PC-3 (cell line): ENCODE measurements at regions of chr2 and their contacts with region 1.

Region 1: DNA sequence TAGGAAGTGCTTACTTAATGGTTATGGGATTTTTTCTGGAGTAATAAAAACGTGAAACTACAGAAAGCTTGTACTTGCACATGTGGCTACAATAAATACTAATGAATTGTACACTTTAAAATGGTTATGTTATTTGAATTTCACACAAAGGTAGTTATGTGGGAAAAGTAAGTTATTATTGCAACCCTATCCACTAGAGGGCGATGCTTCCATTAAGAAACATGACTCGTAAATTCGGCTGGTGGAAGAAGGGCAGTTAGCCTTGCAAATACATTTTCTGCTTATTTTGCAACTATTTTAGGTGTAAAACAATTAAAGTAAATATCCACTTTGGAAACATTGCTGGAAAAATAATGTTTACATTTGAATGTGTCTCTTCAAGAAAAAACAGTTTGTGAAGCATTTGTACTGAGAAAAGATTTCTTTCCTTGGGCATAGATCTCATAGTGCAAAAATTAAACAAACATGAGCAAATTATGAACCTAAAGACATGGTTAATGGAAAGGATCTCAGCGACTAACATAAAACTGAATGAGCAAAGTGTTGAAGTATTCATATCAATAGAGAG is 68.1 kb upstream of the CSRNP3 start:
- DNase-seq: peak; percentile 92
- ATAC-seq: peak; percentile 23
- H3K4me3 ChIP-seq: no peak overlapping the region
- H3K27ac ChIP-seq: no peak overlapping the region
- H3K4me1 ChIP-seq: peaks cover 23% of the 10 kb centered on the region
- H3K27me3 ChIP-seq: no peaks in the 10 kb centered on the region
- CTCF ChIP-seq: peak; percentile 97

Region 2: DNA sequence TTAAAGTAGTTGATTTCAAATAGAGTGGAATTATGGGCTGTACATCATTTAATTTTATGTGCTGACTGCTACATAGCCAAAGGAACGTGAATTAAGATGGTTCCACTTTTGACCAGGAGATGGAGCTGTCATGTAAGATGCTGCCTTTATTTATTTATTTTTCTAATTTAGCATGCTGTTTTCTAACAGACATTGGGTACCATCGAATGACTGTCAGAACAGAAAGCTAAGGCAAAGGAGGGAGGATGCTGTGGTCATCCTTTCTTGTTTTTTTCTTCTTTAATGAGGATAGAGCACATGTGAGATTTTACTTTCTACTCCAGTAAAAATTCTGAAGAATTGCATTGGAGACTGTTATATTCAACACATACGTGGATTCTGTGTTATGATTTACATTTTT is 162.1 kb before region 1 on chr2 and contains the start of gene SCN2A:
- CTCF ChIA-PET with region 1: no interaction called
- POLR2A ChIA-PET with region 1: no interaction called
- intact Hi-C with region 1: loop called (anchors 2 kb)
- DNase-seq: peak; percentile 67
- ATAC-seq: peak; percentile 37
- H3K4me3 ChIP-seq: no peak within 1 kb of the TSS
- H3K27ac ChIP-seq: no peak within 1 kb of the TSS
- H3K4me1 ChIP-seq: no peaks in the 10 kb centered on the region
- H3K27me3 ChIP-seq: no peaks in the 10 kb centered on the region
- CTCF ChIP-seq: peak; percentile 74
- total RNA-seq, gene SCN2A: 0.07 and 0.46 TPM in 2 replicates

Region 3: DNA sequence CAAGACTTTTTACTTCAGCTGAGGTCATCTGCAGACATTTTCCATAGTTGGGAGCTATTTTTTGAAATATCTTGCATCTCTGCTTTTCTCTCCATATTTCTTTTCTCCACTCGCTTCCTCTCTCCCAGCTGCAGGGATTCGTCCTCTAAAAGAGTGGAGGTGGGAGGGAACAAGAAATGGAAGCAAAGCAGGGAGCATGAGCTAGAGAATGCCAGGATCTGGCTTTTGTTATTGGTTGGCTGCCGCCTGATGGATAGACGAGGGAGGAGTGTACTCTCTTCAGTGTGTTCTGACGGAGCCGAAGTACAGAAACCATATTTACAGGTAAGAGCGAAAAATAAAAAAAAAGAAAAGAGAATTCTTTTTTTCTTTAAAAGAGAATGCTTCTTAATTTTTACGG is 68.0 kb after region 1 on chr2 and contains the start of gene CSRNP3:
- CTCF ChIA-PET with region 1: interaction called, 4 read pairs
- POLR2A ChIA-PET with region 1: no interaction called
- intact Hi-C with region 1: loop called (anchors 1 kb)
- DNase-seq: peak; percentile 97
- ATAC-seq: peak; percentile 100
- H3K4me3 ChIP-seq: peak within 1 kb of the TSS; percentile 73
- H3K27ac ChIP-seq: no peak within 1 kb of the TSS
- H3K4me1 ChIP-seq: peaks cover 24% of the 10 kb centered on the region; the same call in 1 of the 2 replicates
- H3K27me3 ChIP-seq: no peaks in the 10 kb centered on the region
- CTCF ChIP-seq: no peak
- total RNA-seq, gene CSRNP3: 2.2 and 8.3 TPM in 2 replicates

Region 4: DNA sequence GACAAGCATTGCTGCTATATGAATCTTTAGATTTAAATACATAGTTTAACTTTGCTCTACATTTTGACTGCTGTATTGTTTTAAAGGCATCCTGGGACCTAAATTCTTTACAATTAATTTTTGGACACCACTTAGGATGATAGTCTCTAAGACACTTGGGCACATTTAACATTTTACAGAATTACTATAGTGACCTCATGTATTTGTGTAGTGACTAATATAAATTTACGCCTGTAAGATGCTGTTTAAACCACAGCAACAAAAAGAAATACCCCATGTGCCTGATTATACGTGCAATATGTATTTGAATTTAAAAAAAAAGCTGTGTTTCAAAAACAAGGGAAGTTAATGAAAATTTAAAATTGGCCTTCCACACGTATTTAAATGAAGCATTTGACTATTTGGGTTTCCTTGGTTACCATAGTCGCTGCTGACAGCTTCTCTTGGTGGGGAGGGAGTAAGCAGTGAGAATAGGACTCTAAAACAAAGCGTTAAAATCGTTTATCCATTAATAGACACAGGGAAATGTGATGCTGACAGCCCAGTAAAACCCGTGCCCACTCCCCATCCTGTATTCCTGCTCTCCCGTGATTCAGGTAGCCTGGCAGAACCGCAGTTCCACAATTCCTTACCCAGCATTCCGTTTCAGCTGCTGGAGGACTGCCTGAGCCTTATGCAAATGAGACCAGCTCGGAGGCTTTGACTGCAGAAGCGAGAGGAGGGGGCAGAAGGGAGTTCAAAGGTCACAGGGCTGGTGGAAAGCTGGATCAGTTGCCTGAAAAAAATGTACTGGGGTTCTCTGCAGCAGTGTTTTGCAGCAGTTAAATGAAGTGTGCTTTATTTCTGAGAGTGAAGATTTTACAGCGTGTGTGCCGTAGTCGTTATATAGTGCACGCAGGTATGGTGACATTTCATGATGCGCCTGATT is 172.4 kb after region 1 on chr2:
- CTCF ChIA-PET with region 1: no interaction called
- POLR2A ChIA-PET with region 1: no interaction called
- intact Hi-C with region 1: loop called (anchors 2 kb)
- DNase-seq: peak; percentile 62
- ATAC-seq: peak; percentile 92
- H3K4me3 ChIP-seq: peak overlapping the region; percentile 67
- H3K27ac ChIP-seq: peak overlapping the region; percentile 26
- H3K4me1 ChIP-seq: peaks cover 14% of the 10 kb centered on the region
- H3K27me3 ChIP-seq: no peaks in the 10 kb centered on the region
- CTCF ChIP-seq: no peak

Region 5: GRCh38 chr2:165621086-165621560 is 219.8 kb after region 1 on chr2:
- CTCF ChIA-PET with region 1: no interaction called
- POLR2A ChIA-PET with region 1: no interaction called
- intact Hi-C with region 1: loop called (anchors 5 kb)
- DNase-seq: peak; percentile 77
- ATAC-seq: peak; percentile 91
- H3K4me3 ChIP-seq: peak overlapping the region; percentile 22; the same call in 1 of the 2 replicates
- H3K27ac ChIP-seq: peak overlapping the region; percentile 48
- H3K4me1 ChIP-seq: peaks cover 14% of the 10 kb centered on the region
- H3K27me3 ChIP-seq: no peaks in the 10 kb centered on the region
- CTCF ChIP-seq: no peak

Region 6: GRCh38 chr2:165698444-165698894 is 297.1 kb after region 1 on chr2:
- CTCF ChIA-PET with region 1: no interaction called
- POLR2A ChIA-PET with region 1: interaction called, 3 read pairs
- intact Hi-C with region 1: loop called (anchors 1 kb)
- DNase-seq: peak; percentile 80
- ATAC-seq: peak; percentile 96
- H3K4me3 ChIP-seq: no peak overlapping the region
- H3K27ac ChIP-seq: no peak overlapping the region
- H3K4me1 ChIP-seq: no peaks in the 10 kb centered on the region
- H3K27me3 ChIP-seq: 0 out of 2 replicates have a peak, but pooled peaks cover 3% of the 10 kb centered on the region
- CTCF ChIP-seq: peak; percentile 79